ENCODE measurements at regions of chr2 and their contacts with region 1.

Region 1: DNA sequence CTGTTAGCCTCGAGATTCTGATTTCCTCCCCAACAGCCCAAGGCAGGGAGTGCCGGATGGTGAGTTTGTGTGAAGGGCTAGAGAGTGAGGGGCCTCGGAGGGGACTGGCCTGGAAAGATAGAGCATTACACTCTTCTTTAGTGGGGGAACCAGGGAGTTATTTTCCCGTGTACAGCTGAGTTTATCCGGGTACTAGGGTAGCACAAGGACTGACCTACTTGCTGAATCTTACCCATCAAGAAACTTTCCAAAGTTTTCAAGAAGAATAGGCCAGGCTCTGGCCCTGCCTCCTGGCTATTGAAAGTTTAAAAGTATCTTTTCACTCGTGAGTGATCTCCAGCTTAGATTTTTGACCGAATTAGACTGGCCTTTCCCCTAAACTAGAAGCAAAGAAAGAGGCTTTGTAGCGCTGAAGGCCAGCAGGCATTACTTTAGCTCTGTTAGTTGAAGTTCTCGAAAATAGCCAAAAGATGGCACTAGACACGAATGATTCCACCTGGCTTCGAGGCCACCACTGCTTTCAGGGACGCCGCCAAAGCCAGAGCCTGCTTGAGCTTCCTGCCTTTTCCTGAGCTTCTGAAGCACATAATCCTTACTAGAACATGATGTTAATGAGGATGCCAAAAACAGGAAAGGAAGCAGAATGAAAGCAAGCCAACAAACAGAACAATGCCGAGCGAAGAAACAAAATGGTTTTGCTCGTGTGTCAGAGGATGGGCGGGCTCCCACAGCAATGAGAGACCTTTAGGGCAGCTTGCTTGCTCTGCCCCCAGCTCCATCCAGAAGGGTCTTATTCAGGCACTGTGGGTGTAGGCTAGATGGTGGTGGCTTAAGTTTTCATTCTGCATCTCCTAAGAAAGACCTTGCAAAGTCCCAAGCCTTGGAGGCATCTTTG is 55.8 kb downstream of the TSN start:
- DNase-seq: peak; percentile 33
- ATAC-seq: peak; percentile 94
- H3K4me3 ChIP-seq: no peak overlapping the region
- H3K27ac ChIP-seq: no peak overlapping the region
- H3K4me1 ChIP-seq: no peaks in the 10 kb centered on the region
- H3K27me3 ChIP-seq: no peaks in the 10 kb centered on the region
- CTCF ChIP-seq: peak; percentile 81

Region 2: DNA sequence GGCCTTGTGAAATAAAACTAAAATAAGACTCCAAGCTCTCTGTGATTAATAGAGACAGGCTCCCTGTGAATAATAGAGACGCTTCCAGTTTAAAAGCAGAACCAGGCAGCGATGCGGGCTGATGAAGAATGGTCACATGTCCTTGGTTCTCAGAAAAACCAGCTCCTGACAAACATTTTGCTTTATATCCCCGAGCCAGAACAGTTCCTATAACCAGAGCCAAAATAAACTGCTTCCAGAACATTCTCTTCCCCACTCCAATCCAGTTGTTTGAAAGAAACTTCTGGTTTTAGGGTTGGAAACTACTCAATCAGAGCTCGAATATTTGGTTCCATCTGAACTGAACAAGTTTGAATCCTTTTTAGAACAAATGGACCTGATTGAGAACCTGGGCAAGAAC is 158.0 kb after region 1 on chr2:
- CTCF ChIA-PET with region 1: no interaction called
- POLR2A ChIA-PET with region 1: no interaction called
- in situ Hi-C with region 1: no loop called
- intact Hi-C with region 1: loop called (anchors 10 kb)
- DNase-seq: no peak
- ATAC-seq: no peak
- H3K4me3 ChIP-seq: no peak overlapping the region
- H3K27ac ChIP-seq: no peak overlapping the region
- H3K4me1 ChIP-seq: no peaks in the 10 kb centered on the region
- H3K27me3 ChIP-seq: peaks cover 8% of the 10 kb centered on the region
- CTCF ChIP-seq: no peak